Activated T-helper 1 cell treated with anti-CD3 and anti-CD28 coated beads, Interleukin-12 subunit alpha, Interleukin-12 subunit beta, Interleukin-2, Interleukin-4 antibody, amounts not matched to agents 30 ng/mL and 10 ng/mL and 1 ng/mL, durations not matched to agents 14 hours and 24 hours and 36 hours (primary cell): ENCODE measurements at regions of chr19 and their contacts with region 1.

Region 1: DNA sequence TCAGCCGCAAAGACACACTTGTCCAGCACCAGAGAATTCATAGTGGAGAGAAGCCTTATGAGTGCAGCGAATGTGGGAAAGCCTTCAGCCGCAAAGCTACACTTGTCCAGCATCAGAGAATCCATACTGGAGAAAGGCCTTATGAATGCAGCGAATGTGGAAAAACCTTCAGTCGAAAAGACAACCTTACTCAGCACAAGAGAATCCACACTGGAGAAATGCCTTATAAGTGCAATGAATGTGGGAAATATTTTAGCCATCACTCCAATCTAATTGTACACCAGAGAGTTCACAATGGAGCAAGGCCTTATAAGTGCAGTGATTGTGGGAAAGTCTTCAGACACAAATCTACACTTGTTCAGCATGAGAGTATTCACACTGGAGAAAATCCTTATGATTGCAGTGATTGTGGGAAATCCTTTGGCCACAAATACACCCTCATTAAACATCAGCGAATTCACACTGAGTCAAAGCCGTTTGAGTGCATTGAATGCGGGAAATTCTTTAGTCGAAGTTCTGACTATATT is 6.7 kb downstream of the ZNF134 start:
- DNase-seq: no peak
- H3K4me3 Mint-ChIP-seq: no peak overlapping the region
- H3K27ac Mint-ChIP-seq: no peak overlapping the region
- H3K4me1 Mint-ChIP-seq: no peaks in the 10 kb centered on the region
- H3K27me3 Mint-ChIP-seq: no peaks in the 10 kb centered on the region

Region 2: GRCh38 chr19:57110592-57111328 is 510.0 kb before region 1 on chr19:
- intact Hi-C with region 1: loop called (anchors 5 kb)
- DNase-seq: no peak
- H3K4me3 Mint-ChIP-seq: no peak overlapping the region
- H3K27ac Mint-ChIP-seq: no peak overlapping the region
- H3K4me1 Mint-ChIP-seq: no peaks in the 10 kb centered on the region
- H3K27me3 Mint-ChIP-seq: no peaks in the 10 kb centered on the region

Region 3: DNA sequence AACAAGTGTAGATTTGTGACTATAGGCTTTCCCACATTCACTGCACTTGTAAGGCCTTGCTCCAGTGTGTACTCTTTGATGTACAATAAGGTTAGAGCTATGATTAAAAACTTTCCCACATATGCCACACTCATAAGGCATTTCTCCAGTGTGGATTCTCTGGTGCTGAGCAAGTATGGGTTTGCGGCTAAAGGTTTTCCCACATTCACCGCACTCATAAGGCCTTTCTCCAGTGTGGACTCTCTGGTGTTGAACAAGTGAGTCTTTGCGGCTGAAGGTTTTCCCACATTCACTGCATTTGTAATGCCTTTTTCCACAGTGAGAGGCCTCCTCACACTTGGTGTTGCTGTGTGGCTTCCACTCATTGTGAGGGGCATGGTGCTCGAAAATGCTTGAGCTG is 147.1 kb before region 1 on chr19:
- intact Hi-C with region 1: no loop called
- DNase-seq: no peak
- H3K4me3 Mint-ChIP-seq: no peak overlapping the region
- H3K27ac Mint-ChIP-seq: no peak overlapping the region
- H3K4me1 Mint-ChIP-seq: peaks cover 11% of the 10 kb centered on the region
- H3K27me3 Mint-ChIP-seq: no peaks in the 10 kb centered on the region

Region 4: DNA sequence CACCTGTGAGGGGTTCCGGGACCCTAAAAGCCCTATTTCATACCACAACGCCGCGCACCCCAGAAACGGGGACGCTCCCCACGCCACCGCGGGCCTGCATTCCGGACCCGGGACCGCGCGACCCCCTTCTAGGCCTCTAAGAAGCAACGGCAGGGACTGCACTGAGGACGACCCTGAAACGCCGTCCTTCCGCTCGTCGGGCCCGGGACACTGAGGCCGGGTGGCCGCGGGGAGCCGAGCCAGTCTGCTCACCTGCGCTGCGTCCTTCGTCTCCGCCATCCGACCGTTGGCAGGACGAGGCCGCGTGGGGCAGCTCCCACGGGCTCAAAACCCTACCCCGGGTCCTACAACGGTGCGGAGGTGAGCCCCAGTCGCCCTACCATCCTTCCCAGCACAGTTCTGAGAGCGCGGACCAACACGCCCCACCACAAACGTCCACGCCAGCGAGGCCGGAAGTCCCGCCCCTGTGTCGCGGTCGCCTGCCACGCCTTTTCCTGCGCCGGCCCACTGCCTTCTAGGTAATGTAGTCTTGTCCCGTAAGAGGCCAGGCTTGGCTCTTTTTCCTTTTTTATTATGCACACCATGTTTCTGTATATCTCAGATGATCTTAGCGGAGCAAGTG is 61.2 kb before region 1 on chr19 and contains the start of gene ZNF550:
- intact Hi-C with region 1: no loop called
- DNase-seq: peak; percentile 84
- H3K4me3 Mint-ChIP-seq: peak within 1 kb of the TSS; percentile 98
- H3K27ac Mint-ChIP-seq: peak within 1 kb of the TSS; percentile 88
- H3K4me1 Mint-ChIP-seq: peaks cover 28% of the 10 kb centered on the region
- H3K27me3 Mint-ChIP-seq: no peaks in the 10 kb centered on the region
- total RNA-seq, gene ZNF550: 7.2 and 7.5 TPM in 2 replicates

Region 5: DNA sequence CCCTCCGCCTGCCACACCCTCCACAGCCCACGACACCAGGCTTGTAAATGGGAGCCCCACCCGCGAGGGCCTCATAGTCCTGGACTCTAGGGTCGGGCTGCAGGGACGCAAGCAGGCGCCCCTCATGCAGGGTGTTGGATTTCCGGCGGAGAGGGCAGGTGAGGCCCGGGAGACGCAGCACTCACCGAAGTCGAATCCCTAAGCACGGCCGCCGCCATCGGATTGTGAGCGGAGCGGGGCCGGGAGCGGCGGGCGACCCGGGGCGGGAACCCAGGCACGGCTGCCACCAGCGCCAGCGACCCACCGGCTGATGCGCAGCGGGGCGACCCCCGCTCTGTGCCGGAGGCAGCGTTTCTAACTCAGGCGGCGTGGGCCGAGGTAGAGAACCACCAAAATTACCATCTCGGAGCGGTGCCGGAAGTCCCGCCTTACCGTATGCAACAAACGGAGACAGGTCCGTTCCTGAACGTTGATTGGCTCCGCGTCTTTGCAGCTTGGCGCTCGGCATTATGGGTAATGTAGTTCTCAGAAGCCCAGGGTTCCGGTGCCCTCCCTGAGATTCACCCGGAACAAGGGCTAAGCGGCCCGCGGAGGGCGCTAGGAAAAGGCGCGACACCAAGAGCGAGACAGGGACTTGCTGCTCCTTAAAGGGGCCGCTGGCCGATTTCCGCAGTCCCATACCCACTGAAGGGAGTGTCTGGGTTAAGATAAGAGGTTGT is 42.1 kb before region 1 on chr19 and contains the start of gene ZNF416:
- intact Hi-C with region 1: no loop called
- DNase-seq: peak; percentile 94
- H3K4me3 Mint-ChIP-seq: peak within 1 kb of the TSS; percentile 80
- H3K27ac Mint-ChIP-seq: peak within 1 kb of the TSS; percentile 74
- H3K4me1 Mint-ChIP-seq: peaks cover 18% of the 10 kb centered on the region
- H3K27me3 Mint-ChIP-seq: no peaks in the 10 kb centered on the region
- total RNA-seq, gene ZNF416: 3.2 and 3.7 TPM in 2 replicates

Region 6: DNA sequence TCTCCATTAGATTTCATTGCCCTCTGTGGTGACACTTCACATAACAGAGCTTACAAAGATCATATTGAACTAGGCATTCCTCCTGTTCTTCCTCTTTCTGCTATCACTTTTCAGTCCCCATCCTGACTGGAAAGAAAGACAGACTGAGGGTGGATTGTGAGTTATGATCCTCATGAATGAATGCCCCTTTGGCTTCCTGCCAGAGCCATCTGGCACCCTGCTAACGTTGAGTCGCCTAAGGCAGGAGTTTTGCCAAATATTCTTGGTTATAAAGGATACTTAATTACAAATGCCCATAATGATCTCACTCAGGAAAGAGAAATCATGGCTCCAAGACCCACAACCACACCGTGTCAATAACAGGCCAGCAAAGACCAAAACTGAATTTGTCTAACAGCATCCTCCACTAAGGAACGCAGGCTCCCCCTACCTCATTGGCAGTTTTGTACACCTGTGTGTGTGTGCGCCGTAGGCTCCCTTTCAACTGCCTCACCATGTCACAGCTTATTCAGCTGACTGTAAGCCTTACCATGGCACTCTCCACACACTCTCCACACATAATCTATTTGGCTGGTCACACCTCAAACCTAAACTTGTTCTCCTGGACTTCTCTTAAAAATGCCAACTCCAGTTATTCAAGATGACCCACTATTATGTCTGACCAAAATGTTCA is 27.7 kb after region 1 on chr19:
- intact Hi-C with region 1: no loop called
- DNase-seq: no peak
- H3K4me3 Mint-ChIP-seq: no peak overlapping the region
- H3K27ac Mint-ChIP-seq: no peak overlapping the region
- H3K4me1 Mint-ChIP-seq: no peaks in the 10 kb centered on the region
- H3K27me3 Mint-ChIP-seq: no peaks in the 10 kb centered on the region